B cell (primary cell): ENCODE measurements at regions of chr6 and their contacts with region 1.

Region 1: GRCh38 chr6:155085582-155086257 is 90.6 kb downstream of the TIAM2 start:
- DNase-seq: no peak
- ATAC-seq: no peak
- H3K4me3 ChIP-seq: no peak overlapping the region
- H3K4me3 Mint-ChIP-seq: no peak overlapping the region
- H3K27ac ChIP-seq: no peak overlapping the region
- H3K27ac Mint-ChIP-seq: no peak overlapping the region
- H3K4me1 ChIP-seq: no peaks in the 10 kb centered on the region
- H3K4me1 Mint-ChIP-seq: no peaks in the 10 kb centered on the region
- H3K27me3 ChIP-seq: peaks cover 0 to 7% (median 0%) of the 10 kb centered on the region in 4 experiments
- H3K27me3 Mint-ChIP-seq: no peaks in the 10 kb centered on the region
- CTCF ChIP-seq: no peak

Region 2: DNA sequence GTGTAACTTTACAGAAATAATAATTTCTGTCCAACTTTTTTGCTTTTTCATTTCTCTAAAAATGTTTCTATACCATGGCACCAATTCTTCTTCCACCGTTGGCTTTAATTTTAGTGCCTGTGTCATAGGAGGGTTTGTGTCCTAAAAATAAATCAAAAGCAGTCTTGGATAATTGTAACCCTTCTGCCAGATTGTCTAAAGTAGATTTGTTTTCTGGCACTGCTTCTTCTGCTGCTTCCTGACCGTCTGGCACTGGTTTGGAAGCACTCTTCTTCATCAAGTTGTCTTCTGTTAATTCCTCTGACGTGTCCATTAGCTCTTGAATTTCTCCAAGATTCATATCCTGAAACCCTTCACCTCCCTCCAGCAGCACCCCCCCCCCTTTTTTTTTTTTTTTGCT is 319.4 kb before region 1 on chr6:
- CTCF ChIA-PET with region 1: no interaction called
- POLR2A ChIA-PET with region 1: no interaction called
- intact Hi-C with region 1: no loop called
- DNase-seq: no peak
- ATAC-seq: no peak
- H3K4me3 ChIP-seq: no peak overlapping the region
- H3K4me3 Mint-ChIP-seq: no peak overlapping the region
- H3K27ac ChIP-seq: no peak overlapping the region
- H3K27ac Mint-ChIP-seq: no peak overlapping the region
- H3K4me1 ChIP-seq: peaks cover 15 to 29% of the 10 kb centered on the region in 2 donors
- H3K4me1 Mint-ChIP-seq: peaks cover 72% of the 10 kb centered on the region
- H3K27me3 ChIP-seq: no peaks in the 10 kb centered on the region
- H3K27me3 Mint-ChIP-seq: no peaks in the 10 kb centered on the region
- CTCF ChIP-seq: no peak

Region 3: DNA sequence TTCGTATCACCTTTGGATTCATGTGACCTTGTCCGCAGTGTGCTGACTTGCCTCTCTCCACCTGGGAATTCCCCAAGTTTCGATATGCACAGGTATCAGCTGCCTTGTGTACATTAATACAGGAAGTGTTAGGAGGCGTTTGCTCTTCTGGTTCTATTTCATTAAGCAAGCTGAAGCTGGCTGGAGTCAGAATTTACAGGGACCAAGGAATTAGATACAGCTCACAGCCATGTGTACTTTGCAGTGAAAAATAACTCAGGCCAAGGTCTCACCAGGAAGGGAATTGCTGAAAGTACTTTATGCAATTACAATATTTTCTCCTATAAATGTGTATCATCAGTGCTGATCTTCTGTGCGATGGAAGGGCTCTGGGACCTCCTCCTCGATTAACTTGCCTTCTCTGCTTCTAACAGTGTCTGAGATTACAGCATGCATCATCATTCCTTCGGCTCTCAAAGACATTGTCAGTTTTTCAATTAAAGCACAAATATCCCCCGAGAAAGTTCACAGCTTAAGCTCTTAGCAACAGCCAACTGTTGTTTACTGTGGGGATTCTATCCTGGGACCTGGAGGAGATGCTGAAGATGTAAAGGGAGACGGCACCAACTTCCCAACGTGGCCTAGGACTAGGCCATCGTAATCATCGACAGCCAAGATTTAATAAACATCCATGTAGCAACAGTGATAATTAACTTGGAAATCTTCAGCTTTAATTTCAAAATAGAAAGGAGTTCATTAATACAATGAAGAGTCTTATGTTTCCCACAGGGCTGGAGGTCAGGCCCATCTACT is 104.4 kb before region 1 on chr6:
- CTCF ChIA-PET with region 1: no interaction called
- POLR2A ChIA-PET with region 1: interaction called, 10 read pairs
- intact Hi-C with region 1: no loop called
- DNase-seq: no peak
- ATAC-seq: no peak
- H3K4me3 ChIP-seq: no peak overlapping the region
- H3K4me3 Mint-ChIP-seq: no peak overlapping the region
- H3K27ac ChIP-seq: no peak overlapping the region
- H3K27ac Mint-ChIP-seq: no peak overlapping the region
- H3K4me1 ChIP-seq: peaks cover 0 to 3% of the 10 kb centered on the region in 2 donors
- H3K4me1 Mint-ChIP-seq: peaks cover 10% of the 10 kb centered on the region
- H3K27me3 ChIP-seq: no peaks in the 10 kb centered on the region
- H3K27me3 Mint-ChIP-seq: no peaks in the 10 kb centered on the region
- CTCF ChIP-seq: no peak

Region 4: DNA sequence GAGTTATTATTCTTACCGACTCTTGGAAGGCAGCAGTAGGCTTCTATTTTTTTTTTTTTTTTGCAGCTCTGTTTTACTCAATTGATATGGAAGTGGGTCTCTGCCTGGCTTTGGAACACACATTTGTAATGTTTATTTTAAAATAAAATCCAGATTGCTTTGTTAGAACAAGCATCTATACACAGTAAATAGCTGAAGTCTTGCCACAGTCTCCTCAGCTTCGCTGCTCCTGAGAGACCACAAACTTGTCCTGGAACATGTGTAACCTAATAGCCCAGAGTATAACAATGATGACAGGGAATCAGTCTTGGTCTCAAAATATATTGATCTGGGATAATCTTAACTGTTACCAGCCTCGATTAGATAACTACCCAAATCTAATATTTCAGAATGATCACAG is 669.7 kb after region 1 on chr6:
- CTCF ChIA-PET with region 1: no interaction called
- POLR2A ChIA-PET with region 1: no interaction called
- intact Hi-C with region 1: no loop called
- DNase-seq: no peak
- ATAC-seq: no peak
- H3K4me3 ChIP-seq: no peak overlapping the region
- H3K4me3 Mint-ChIP-seq: no peak overlapping the region
- H3K27ac ChIP-seq: no peak overlapping the region
- H3K27ac Mint-ChIP-seq: no peak overlapping the region
- H3K4me1 ChIP-seq: no peaks in the 10 kb centered on the region
- H3K4me1 Mint-ChIP-seq: no peaks in the 10 kb centered on the region
- H3K27me3 ChIP-seq: no peaks in the 10 kb centered on the region
- H3K27me3 Mint-ChIP-seq: peaks cover 4% of the 10 kb centered on the region
- CTCF ChIP-seq: no peak